GM10248 (cell line): ENCODE measurements at regions of chr19 and their contacts with region 1.

Region 1: DNA sequence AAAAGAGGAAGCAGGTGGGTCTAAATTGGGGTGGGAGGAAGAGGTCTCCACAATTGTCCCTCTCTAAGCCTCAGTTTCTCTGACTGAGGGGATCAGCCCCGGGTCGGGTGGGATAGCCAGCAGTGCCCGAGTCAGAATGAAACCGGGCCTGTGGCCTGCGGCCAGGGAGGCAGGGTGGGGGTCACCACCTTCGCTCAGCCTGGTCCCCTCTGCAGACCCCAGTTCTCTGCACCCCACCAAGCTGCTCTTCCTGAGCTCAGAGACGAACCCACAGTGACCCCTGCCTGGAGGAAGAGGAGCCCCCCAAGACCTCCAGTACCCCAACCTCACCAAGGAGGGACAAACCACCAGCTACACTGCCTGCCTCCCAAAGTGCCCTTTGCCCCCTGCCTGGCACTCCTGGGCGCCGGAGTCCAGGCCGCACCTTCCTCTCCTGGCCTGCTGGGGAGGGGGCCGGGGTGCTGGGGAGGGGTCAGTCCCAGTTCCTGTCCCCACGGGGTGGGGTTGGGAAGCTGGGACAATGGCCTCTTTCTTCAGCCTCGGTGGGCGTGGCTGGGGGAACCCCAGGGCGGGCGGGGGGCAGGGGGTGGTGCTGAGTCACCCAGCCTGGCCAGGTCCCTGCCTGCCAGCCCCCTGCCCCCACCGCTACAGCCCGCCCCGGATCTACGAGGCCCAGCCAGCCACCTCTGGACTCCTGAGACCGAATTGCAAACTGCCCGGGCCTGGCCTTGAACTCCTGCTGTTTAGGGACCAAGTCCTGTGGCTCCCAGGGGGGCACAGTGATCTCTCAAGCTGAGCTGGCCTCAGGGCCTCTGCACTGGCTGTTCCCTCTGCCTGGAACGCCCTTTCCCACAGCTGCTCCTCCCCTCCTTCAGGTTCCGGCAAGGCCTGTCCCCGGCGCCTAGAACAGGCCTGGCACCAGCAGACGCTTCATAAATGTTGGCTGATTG is 14.4 kb downstream of the ZBTB7A start:
- DNase-seq: no peak
- CTCF ChIP-seq: no peak

Region 2: DNA sequence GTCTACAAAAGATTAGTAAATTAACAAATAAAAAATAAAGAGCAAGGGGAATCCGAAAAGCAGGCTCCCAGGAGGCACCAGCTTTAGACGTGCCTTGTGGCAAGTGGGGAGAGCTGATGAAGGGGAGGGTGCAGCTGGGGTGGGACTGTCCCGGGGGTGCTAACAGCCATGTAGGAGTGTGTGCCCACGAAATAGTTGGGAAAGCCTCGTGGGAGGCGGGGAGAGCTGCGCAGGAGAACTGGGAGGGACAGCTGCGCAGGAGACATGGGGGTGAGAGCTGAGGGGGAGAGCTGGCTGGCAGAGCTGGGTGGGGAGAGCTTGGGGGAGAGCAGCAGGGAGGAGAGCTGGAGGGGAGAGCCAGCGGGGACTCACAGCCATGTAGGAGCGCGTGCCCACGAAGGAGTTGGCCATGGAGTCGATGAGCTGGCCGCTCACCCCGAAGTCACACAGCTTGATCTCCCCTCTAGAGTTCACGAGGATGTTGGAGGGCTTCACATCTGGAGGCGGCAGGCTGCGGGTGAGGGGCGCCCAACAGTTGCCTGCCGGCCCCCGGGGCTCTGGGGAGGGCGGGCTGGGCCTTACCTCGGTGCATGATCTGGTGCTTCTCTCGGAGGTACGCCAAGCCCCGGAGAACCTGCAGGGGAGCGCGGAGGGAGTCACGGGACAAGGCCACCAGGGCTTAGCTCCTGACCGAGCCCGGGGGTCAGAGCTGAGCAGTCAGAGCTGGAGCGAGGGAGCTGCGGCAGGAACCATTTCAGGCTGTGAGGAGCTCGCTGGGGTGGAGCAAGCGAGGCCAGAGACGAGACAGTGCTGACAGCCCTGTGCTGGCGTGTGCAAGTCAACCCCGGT is 48.5 kb after region 1 on chr19:
- CTCF ChIA-PET with region 1: no interaction called
- POLR2A ChIA-PET with region 1: interaction called, 11 read pairs
- DNase-seq: no peak
- CTCF ChIP-seq: no peak